HepG2 (cell line): ENCODE measurements at regions of chr6 and their contacts with region 1.

Region 1: GRCh38 chr6:32118782-32119628 is 9.0 kb downstream of the ATF6B start:
- DNase-seq: peak; percentile 84
- ATAC-seq: peak; percentile 93
- H3K4me3 ChIP-seq: peak overlapping the region; percentile 45 to 59 (median 56); a peak in 5 of 6 replicates
- H3K27ac ChIP-seq: peak overlapping the region; percentile 87
- H3K4me1 ChIP-seq: peaks cover 24% of the 10 kb centered on the region
- H3K27me3 ChIP-seq: no peaks in the 10 kb centered on the region
- CTCF ChIP-seq: peak; percentile 95
- EP300 ChIP-seq: no peak
- POLR2A ChIP-seq: peak in 1 of 2 experiments; percentile 63; a peak in 3 of 4 replicates
- RAD21 ChIP-seq: peak; percentile 97

Region 2: GRCh38 chr6:32087574-32088486 is 31.2 kb before region 1 on chr6:
- CTCF ChIA-PET with region 1: interaction called, 6 read pairs
- POLR2A ChIA-PET with region 1: interaction called, 4 read pairs
- in situ Hi-C with region 1: no loop called
- intact Hi-C with region 1: loop called (anchors 1 kb)
- DNase-seq: peak; percentile 82
- ATAC-seq: peak; percentile 93
- H3K4me3 ChIP-seq: peak overlapping the region; percentile 37 to 62 (median 45); a peak in 4 of 6 replicates
- H3K27ac ChIP-seq: no peak overlapping the region
- H3K4me1 ChIP-seq: peaks cover 41% of the 10 kb centered on the region
- H3K27me3 ChIP-seq: peaks cover 4 to 31% of the 10 kb centered on the region in 2 experiments
- CTCF ChIP-seq: peak; percentile 93
- EP300 ChIP-seq: no peak
- POLR2A ChIP-seq: no peak
- RAD21 ChIP-seq: peak; percentile 96

Region 3: GRCh38 chr6:32177788-32178546 is 59.0 kb after region 1 on chr6 and contains the start of gene RNF5:
- CTCF ChIA-PET with region 1: interaction called, 3 read pairs
- POLR2A ChIA-PET with region 1: interaction called, 8 read pairs
- in situ Hi-C with region 1: no loop called
- intact Hi-C with region 1: loop called (anchors 2 kb)
- DNase-seq: peak; percentile 100
- ATAC-seq: peak; percentile 90
- H3K4me3 ChIP-seq: peak within 1 kb of the TSS; percentile 96 to 98 (median 98)
- H3K27ac ChIP-seq: peak within 1 kb of the TSS; percentile 97
- H3K4me1 ChIP-seq: peaks cover 54% of the 10 kb centered on the region
- H3K27me3 ChIP-seq: no peaks in the 10 kb centered on the region; a peak in 1 of 5 replicates
- CTCF ChIP-seq: no peak
- EP300 ChIP-seq: peak; percentile 10 to 17; a peak in 1 of 4 replicates
- POLR2A ChIP-seq: peak; percentile 1 to 14; a peak in 1 of 4 replicates
- RAD21 ChIP-seq: no peak
- total RNA-seq, gene RNF5: 98.0 and 107 TPM in 2 replicates